ENCODE measurements at regions of chr3 and their contacts with region 1.

Region 1: DNA sequence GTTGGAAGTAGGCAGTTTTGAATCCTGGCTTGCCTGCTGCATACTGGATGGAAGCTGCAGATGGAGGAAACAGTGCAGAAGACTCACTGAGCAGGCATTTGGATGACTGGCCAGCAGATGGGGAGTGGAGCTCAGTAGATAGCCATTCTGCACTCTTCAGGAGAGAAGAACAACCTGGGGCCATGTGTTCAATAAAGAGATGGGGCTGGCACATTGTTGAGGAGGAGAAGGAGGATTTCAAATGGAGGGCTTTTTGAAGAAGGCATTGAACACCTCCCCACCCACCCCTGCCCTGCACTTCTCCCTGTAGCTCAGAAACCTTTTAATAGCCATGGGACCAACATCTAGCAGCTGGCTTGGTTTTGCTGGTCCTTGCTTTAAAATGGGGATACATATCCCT is 109.8 kb downstream of the CACNA1D start:
- DNase-seq: no peak
- H3K4me3 ChIP-seq: no peak overlapping the region
- H3K27ac ChIP-seq: no peak overlapping the region
- H3K4me1 ChIP-seq: no peaks in the 10 kb centered on the region
- H3K27me3 ChIP-seq: no peaks in the 10 kb centered on the region
- CTCF ChIP-seq: no peak
- EP300 ChIP-seq: no peak
- POLR2A ChIP-seq: no peak

Region 2: GRCh38 chr3:52574056-52574965 is 1029.9 kb before region 1 on chr3:
- in situ Hi-C with region 1: no loop called
- intact Hi-C with region 1: no loop called
- DNase-seq: no peak
- H3K4me3 ChIP-seq: no peak overlapping the region
- H3K27ac ChIP-seq: peak overlapping the region in 1 of 4 donors; percentile 8
- H3K4me1 ChIP-seq: peaks cover 0 to 7% (median 3%) of the 10 kb centered on the region in 4 donors
- H3K27me3 ChIP-seq: no peaks in the 10 kb centered on the region
- CTCF ChIP-seq: no peak
- EP300 ChIP-seq: no peak
- POLR2A ChIP-seq: no peak

Region 3: GRCh38 chr3:53416530-53416929 is 187.7 kb before region 1 on chr3:
- in situ Hi-C with region 1: no loop called
- intact Hi-C with region 1: no loop called
- DNase-seq: no peak
- H3K4me3 ChIP-seq: no peak overlapping the region
- H3K27ac ChIP-seq: no peak overlapping the region
- H3K4me1 ChIP-seq: no peaks in the 10 kb centered on the region
- H3K27me3 ChIP-seq: no peaks in the 10 kb centered on the region
- CTCF ChIP-seq: no peak
- EP300 ChIP-seq: no peak
- POLR2A ChIP-seq: no peak

Region 4: GRCh38 chr3:53677413-53677812 is 73.2 kb after region 1 on chr3:
- in situ Hi-C with region 1: no loop called
- intact Hi-C with region 1: loop called (anchors 10 kb)
- DNase-seq: no peak
- H3K4me3 ChIP-seq: no peak overlapping the region
- H3K27ac ChIP-seq: no peak overlapping the region
- H3K4me1 ChIP-seq: peaks cover 0 to 6% (median 0%) of the 10 kb centered on the region in 4 donors
- H3K27me3 ChIP-seq: no peaks in the 10 kb centered on the region
- CTCF ChIP-seq: peak in 1 of 5 experiments; percentile 11
- EP300 ChIP-seq: no peak
- POLR2A ChIP-seq: no peak

Region 5: DNA sequence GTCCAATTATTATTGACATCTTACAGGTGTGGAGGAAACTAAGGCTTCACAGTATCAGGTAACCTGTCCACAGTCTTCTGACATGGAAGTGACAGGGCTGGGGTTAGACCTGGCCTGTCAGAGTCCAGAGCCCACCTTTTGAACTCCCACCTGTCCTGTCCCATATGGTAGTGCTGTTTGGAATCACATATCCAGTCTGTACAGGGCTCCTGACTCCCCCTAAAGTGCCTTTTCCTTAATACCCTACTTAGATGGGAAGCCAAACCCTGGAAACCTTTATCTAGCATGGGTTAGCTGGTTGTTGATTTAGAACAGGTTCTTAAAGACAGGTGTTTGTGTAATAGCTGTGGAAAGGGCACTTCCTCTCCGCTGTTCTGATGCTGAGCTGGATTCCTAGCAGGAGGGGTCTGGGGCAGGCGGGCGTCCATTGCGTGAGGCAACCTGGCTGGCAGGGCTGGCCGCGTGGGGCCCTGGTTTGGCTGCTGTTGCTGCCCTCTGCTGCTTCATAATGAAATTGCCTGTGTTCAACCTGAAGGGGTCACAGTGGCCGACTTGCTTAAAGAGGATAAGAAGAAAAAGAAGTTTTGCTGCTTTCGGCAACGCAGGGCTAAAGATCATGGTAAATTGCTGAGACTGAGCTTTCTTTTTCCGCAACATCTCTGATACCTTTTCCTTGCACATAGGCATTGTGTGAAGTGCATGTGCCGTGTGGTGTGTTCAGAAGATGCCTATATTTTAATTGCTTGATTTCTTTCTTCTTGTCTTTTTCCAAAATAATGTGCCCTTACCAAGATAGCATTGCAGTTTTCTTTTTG is 105.8 kb after region 1 on chr3:
- in situ Hi-C with region 1: no loop called
- intact Hi-C with region 1: no loop called
- DNase-seq: peak; percentile 60
- H3K4me3 ChIP-seq: no peak overlapping the region
- H3K27ac ChIP-seq: no peak overlapping the region
- H3K4me1 ChIP-seq: peaks cover 0 to 6% (median 0%) of the 10 kb centered on the region in 4 donors
- H3K27me3 ChIP-seq: no peaks in the 10 kb centered on the region
- CTCF ChIP-seq: peak; percentile 75 to 82 (median 80)
- EP300 ChIP-seq: no peak
- POLR2A ChIP-seq: no peak

Measured in transverse colon (tissue), 4 donors.